PC-3 (cell line): ENCODE measurements at regions of chr17 and their contacts with region 1.

Region 1: DNA sequence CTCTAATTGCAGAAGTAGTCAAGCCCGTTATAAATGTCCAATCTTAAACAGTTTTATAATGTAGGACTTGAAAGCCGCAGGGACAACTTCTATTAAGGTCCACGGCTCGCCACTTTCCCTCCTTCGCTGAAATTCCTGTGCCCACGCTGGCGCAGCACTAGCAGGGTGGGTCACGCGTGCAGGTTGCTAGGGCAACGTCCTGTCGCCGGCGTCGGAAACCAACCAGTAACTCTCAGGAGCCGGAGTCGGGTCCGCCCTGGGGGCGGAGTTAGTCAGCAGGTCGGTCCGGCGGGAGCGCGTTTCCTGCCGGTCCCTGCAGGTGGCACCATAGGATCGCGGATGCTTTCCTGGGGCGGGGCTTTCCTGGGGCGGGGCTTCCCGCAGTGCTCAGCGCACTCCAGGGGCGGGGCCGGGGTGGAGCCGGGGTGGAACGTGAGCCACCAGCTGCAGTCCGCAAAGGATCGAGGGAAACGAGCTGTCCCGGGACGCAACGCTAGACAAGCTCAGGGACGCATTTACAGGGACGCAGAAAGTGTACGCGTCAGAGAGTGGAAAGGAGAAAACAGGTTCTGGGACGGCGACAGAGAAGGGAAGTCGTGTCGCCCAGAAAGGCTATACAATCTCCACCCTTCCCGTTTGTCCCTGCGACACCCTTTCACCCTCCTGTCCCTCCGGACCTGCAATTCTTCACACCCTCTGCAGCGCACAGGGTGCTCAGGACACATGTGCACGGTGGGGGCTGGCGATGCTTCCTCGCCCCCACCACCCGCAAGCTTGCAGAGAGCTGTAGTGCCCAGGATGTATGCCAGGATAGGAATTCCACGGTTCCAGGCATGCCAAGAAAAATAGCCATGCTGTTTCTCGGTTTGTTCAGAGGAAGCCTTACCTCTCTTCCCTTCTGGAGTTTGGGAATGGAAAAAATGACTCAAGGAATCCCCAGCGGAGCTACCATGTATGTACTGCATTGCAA is 12.4 kb downstream of the COPZ2 start:
- DNase-seq: peak; percentile 99
- ATAC-seq: peak; percentile 63
- H3K4me3 ChIP-seq: peak overlapping the region; percentile 72
- H3K27ac ChIP-seq: peak overlapping the region; percentile 88
- H3K4me1 ChIP-seq: peaks cover 41% of the 10 kb centered on the region
- H3K27me3 ChIP-seq: no peaks in the 10 kb centered on the region
- CTCF ChIP-seq: peak; percentile 87

Region 2: GRCh38 chr17:47915776-47916398 is 109.3 kb before region 1 on chr17:
- CTCF ChIA-PET with region 1: no interaction called
- POLR2A ChIA-PET with region 1: no interaction called
- intact Hi-C with region 1: no loop called
- DNase-seq: no peak
- ATAC-seq: no peak
- H3K4me3 ChIP-seq: no peak overlapping the region
- H3K27ac ChIP-seq: no peak overlapping the region
- H3K4me1 ChIP-seq: no peaks in the 10 kb centered on the region
- H3K27me3 ChIP-seq: no peaks in the 10 kb centered on the region
- CTCF ChIP-seq: no peak

Region 3: GRCh38 chr17:47957591-47958428 is 67.4 kb before region 1 on chr17 and contains the start of gene PRR15L:
- CTCF ChIA-PET with region 1: no interaction called
- POLR2A ChIA-PET with region 1: interaction called, 12 read pairs
- intact Hi-C with region 1: no loop called
- DNase-seq: peak; percentile 80
- ATAC-seq: peak; percentile 79
- H3K4me3 ChIP-seq: peak within 1 kb of the TSS; percentile 42; the same call in 1 of the 2 replicates
- H3K27ac ChIP-seq: peak within 1 kb of the TSS; percentile 59
- H3K4me1 ChIP-seq: peaks cover 30% of the 10 kb centered on the region
- H3K27me3 ChIP-seq: no peaks in the 10 kb centered on the region
- CTCF ChIP-seq: no peak
- total RNA-seq, gene PRR15L: 3.8 and 6.0 TPM in 2 replicates

Region 4: DNA sequence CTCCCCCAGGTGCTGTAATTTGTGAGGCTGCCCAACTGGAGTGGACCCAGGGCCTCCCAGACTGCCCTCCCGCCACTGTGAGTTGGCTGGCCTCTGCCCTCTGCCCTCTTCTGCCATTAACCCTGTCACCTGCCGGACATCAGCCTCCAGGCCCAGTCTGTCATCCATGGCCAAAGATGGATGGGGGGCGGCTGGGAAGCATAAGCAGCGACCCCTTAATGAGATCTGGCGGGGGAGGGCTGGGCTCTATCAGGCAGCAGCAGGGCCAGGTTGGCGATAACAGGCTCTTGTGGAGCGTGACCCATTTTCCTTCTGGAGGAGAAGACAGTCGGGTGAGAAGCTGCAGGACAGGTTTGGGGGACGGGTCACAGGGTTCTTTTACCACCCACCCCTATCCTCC is 29.0 kb before region 1 on chr17:
- CTCF ChIA-PET with region 1: no interaction called
- POLR2A ChIA-PET with region 1: no interaction called
- intact Hi-C with region 1: no loop called
- DNase-seq: no peak
- ATAC-seq: no peak
- H3K4me3 ChIP-seq: no peak overlapping the region
- H3K27ac ChIP-seq: no peak overlapping the region
- H3K4me1 ChIP-seq: peaks cover 14% of the 10 kb centered on the region; the same call in 1 of the 2 replicates
- H3K27me3 ChIP-seq: no peaks in the 10 kb centered on the region
- CTCF ChIP-seq: no peak

Region 5: GRCh38 chr17:48074315-48075081 is 49.3 kb after region 1 on chr17:
- CTCF ChIA-PET with region 1: interaction called, 4 read pairs
- POLR2A ChIA-PET with region 1: interaction called, 5 read pairs
- intact Hi-C with region 1: loop called (anchors 1 kb)
- DNase-seq: peak; percentile 95
- ATAC-seq: peak; percentile 91
- H3K4me3 ChIP-seq: no peak overlapping the region
- H3K27ac ChIP-seq: no peak overlapping the region
- H3K4me1 ChIP-seq: no peaks in the 10 kb centered on the region
- H3K27me3 ChIP-seq: no peaks in the 10 kb centered on the region
- CTCF ChIP-seq: peak; percentile 92

Region 6: DNA sequence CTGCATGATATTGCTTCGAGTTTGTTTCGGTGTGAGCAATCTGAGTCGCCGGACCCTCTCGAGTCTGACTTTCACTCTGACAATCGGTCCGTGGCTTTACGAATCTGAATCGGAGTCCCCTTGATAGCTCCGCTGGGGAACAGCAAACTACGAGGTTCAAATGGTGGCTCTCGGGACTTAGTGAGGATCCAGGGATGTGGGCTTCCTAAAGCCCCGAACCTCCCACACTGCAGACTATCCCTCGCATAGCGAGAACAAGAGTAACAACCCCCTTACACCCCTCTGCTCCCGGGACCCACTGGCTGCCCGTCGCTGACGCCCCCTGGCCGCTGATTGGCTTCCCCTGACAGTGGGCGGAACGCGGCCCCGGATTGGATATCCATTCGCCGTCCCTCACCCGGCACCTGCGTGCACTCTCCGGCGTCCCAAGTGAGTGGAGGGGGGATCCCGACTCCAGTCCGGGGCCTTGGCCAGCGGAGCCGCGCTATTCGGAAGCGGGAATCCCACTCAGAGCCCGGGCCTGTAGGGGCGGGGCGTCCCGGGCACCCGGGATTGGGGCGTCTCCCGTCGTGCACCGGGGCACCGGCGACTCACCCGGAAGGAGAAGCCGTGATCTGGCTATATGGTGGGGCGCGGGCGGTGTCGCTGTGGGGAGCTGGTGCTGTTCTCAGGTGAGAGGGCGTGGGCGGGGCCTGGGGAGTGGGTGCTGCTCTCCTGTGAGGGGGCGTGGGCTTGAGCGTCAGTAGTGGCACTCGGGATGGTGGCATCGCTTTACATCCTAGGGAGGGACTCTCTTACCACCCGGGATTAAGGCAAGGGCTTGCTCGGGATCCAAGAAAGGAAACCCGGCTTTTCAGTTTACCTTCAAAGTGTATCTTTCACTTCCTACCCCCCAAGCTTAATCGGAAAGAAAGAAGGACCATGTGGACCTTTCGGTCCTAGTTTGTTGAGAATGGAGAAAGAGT is 82.2 kb after region 1 on chr17 and contains the start of gene SNX11:
- CTCF ChIA-PET with region 1: interaction called, 10 read pairs
- POLR2A ChIA-PET with region 1: interaction called, 3 read pairs
- intact Hi-C with region 1: no loop called
- DNase-seq: peak; percentile 90
- ATAC-seq: peak; percentile 94
- H3K4me3 ChIP-seq: peak within 1 kb of the TSS; percentile 89
- H3K27ac ChIP-seq: peak within 1 kb of the TSS; percentile 88
- H3K4me1 ChIP-seq: peaks cover 7% of the 10 kb centered on the region; the same call in 1 of the 2 replicates
- H3K27me3 ChIP-seq: no peaks in the 10 kb centered on the region
- CTCF ChIP-seq: no peak
- total RNA-seq, gene SNX11: 17.7 and 23.3 TPM in 2 replicates

Region 7: GRCh38 chr17:48160177-48161081 is 135.2 kb after region 1 on chr17:
- CTCF ChIA-PET with region 1: no interaction called
- POLR2A ChIA-PET with region 1: interaction called, 13 read pairs
- intact Hi-C with region 1: no loop called
- DNase-seq: no peak
- ATAC-seq: no peak
- H3K4me3 ChIP-seq: no peak overlapping the region
- H3K27ac ChIP-seq: no peak overlapping the region
- H3K4me1 ChIP-seq: no peaks in the 10 kb centered on the region
- H3K27me3 ChIP-seq: peaks cover 3% of the 10 kb centered on the region; the same call in 1 of the 2 replicates
- CTCF ChIP-seq: no peak

Region 8: GRCh38 chr17:48335858-48336500 is 310.8 kb after region 1 on chr17:
- CTCF ChIA-PET with region 1: no interaction called
- POLR2A ChIA-PET with region 1: no interaction called
- intact Hi-C with region 1: loop called (anchors 10 kb)
- DNase-seq: peak; percentile 96
- ATAC-seq: peak; percentile 64
- H3K4me3 ChIP-seq: no peak overlapping the region
- H3K27ac ChIP-seq: no peak overlapping the region
- H3K4me1 ChIP-seq: peaks cover 13% of the 10 kb centered on the region
- H3K27me3 ChIP-seq: no peaks in the 10 kb centered on the region; the same call in 1 of the 2 replicates
- CTCF ChIP-seq: peak; percentile 93

Region 9: GRCh38 chr17:48618256-48618897 is 593.2 kb after region 1 on chr17:
- CTCF ChIA-PET with region 1: no interaction called
- POLR2A ChIA-PET with region 1: no interaction called
- intact Hi-C with region 1: loop called (anchors 5 kb)
- DNase-seq: peak; percentile 97
- ATAC-seq: peak; percentile 66
- H3K4me3 ChIP-seq: peak overlapping the region; percentile 80
- H3K27ac ChIP-seq: no peak overlapping the region
- H3K4me1 ChIP-seq: peaks cover 29% of the 10 kb centered on the region
- H3K27me3 ChIP-seq: peaks cover 60% of the 10 kb centered on the region
- CTCF ChIP-seq: peak; percentile 98

Region 10: GRCh38 chr17:49090950-49091594 is 1065.8 kb after region 1 on chr17:
- CTCF ChIA-PET with region 1: no interaction called
- POLR2A ChIA-PET with region 1: no interaction called
- intact Hi-C with region 1: no loop called
- DNase-seq: no peak
- ATAC-seq: no peak
- H3K4me3 ChIP-seq: no peak overlapping the region
- H3K27ac ChIP-seq: no peak overlapping the region
- H3K4me1 ChIP-seq: peaks cover 8% of the 10 kb centered on the region; the same call in 1 of the 2 replicates
- H3K27me3 ChIP-seq: no peaks in the 10 kb centered on the region
- CTCF ChIP-seq: no peak